ENCODE measurements at regions of chr17 and their contacts with region 1.

Region 1: DNA sequence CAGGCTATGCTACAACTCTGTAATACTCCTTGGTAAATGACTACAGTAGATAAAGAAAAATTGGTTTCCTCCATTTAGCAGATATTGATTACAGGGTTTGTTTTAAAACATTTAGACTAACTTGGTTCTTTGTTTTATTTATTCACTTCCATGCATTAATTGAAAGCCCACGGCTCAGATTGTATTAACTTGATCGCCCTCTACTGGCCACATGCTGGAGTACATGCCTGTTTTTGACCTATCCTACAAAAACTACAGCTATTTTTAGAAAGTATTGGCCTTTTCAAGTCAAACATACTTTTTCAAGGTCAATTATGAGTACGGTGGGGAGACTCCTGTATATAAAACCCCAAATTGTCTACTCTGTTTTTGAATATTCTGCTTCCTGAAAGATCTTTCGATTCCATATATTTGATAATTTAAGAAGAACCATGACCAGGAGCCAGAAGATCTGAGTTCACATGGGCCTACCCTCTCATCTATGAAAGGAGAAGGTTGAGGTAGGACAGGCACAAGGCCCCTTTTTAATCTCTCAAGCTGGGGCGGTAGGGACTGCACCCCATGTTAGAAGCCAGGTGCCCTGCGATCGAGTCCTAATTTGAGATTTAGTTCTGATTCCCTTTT is 51.8 kb downstream of the CA10 start:
- DNase-seq: peak; percentile 25
- H3K4me3 ChIP-seq: no peak overlapping the region
- H3K27ac ChIP-seq: no peak overlapping the region
- H3K4me1 ChIP-seq: peaks cover 9% of the 10 kb centered on the region
- H3K27me3 ChIP-seq: no peaks in the 10 kb centered on the region
- CTCF ChIP-seq: peak; percentile 78

Region 2: GRCh38 chr17:51371732-51372151 is 735.0 kb before region 1 on chr17:
- CTCF ChIA-PET with region 1: no interaction called
- dilution Hi-C with region 1: no loop called
- in situ Hi-C with region 1: no loop called
- intact Hi-C with region 1: loop called (anchors 1 kb)
- DNase-seq: peak; percentile 47
- H3K4me3 ChIP-seq: no peak overlapping the region
- H3K27ac ChIP-seq: no peak overlapping the region
- H3K4me1 ChIP-seq: no peaks in the 10 kb centered on the region
- H3K27me3 ChIP-seq: no peaks in the 10 kb centered on the region
- CTCF ChIP-seq: peak; percentile 77 to 87

Region 3: GRCh38 chr17:51439395-51440229 is 667.1 kb before region 1 on chr17:
- CTCF ChIA-PET with region 1: no interaction called
- dilution Hi-C with region 1: no loop called
- in situ Hi-C with region 1: no loop called
- intact Hi-C with region 1: no loop called
- DNase-seq: peak; percentile 24
- H3K4me3 ChIP-seq: no peak overlapping the region
- H3K27ac ChIP-seq: no peak overlapping the region
- H3K4me1 ChIP-seq: no peaks in the 10 kb centered on the region
- H3K27me3 ChIP-seq: no peaks in the 10 kb centered on the region
- CTCF ChIP-seq: no peak

Region 4: GRCh38 chr17:51585514-51586104 is 521.1 kb before region 1 on chr17:
- CTCF ChIA-PET with region 1: no interaction called
- dilution Hi-C with region 1: no loop called
- in situ Hi-C with region 1: no loop called
- intact Hi-C with region 1: loop called (anchors 1 kb)
- DNase-seq: peak; percentile 21
- H3K4me3 ChIP-seq: no peak overlapping the region
- H3K27ac ChIP-seq: no peak overlapping the region
- H3K4me1 ChIP-seq: no peaks in the 10 kb centered on the region
- H3K27me3 ChIP-seq: no peaks in the 10 kb centered on the region
- CTCF ChIP-seq: peak; percentile 86 to 96

Region 5: GRCh38 chr17:51850201-51850600 is 256.5 kb before region 1 on chr17:
- CTCF ChIA-PET with region 1: no interaction called
- dilution Hi-C with region 1: no loop called
- in situ Hi-C with region 1: loop called in 1 of 2 experiments (anchors 10 kb)
- intact Hi-C with region 1: no loop called
- DNase-seq: no peak
- H3K4me3 ChIP-seq: no peak overlapping the region
- H3K27ac ChIP-seq: no peak overlapping the region
- H3K4me1 ChIP-seq: peaks cover 16% of the 10 kb centered on the region
- H3K27me3 ChIP-seq: no peaks in the 10 kb centered on the region
- CTCF ChIP-seq: peak in 1 of 2 donors; percentile 16

Region 6: DNA sequence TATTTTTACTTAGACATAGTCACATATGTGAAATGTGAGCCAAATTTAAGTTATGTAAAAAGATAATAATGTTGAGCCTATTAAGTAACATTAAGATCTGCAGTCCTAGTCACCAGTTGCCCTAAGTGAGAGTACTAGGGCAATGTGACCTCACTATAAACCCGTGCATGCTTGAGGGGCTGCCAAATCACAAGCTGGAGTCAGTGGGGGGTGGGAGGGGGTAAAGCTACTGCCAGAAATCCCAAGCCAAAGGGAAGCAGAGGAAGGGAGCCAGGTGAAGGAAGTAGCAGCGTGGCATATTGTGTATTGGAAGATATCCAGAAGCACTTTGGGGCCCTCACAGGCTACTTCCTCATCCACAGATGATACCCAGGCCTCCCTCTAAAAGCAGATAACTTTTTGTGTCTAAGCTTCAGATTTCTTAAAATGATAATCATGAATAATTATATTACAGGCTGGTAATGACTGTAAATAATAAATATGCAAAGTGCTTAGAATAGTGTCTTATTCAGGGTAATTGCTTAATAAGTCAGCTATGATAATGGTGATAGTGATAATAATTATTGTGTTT is 82.4 kb before region 1 on chr17:
- CTCF ChIA-PET with region 1: no interaction called
- dilution Hi-C with region 1: loop called (anchors 5 kb)
- in situ Hi-C with region 1: no loop called
- intact Hi-C with region 1: no loop called
- DNase-seq: no peak
- H3K4me3 ChIP-seq: no peak overlapping the region
- H3K27ac ChIP-seq: no peak overlapping the region
- H3K4me1 ChIP-seq: peaks cover 24% of the 10 kb centered on the region
- H3K27me3 ChIP-seq: no peaks in the 10 kb centered on the region
- CTCF ChIP-seq: no peak

Region 7: GRCh38 chr17:52079496-52079895 is 27.3 kb before region 1 on chr17:
- CTCF ChIA-PET with region 1: no interaction called
- dilution Hi-C with region 1: no loop called
- in situ Hi-C with region 1: no loop called
- intact Hi-C with region 1: no loop called
- DNase-seq: peak; percentile 12
- H3K4me3 ChIP-seq: no peak overlapping the region
- H3K27ac ChIP-seq: no peak overlapping the region
- H3K4me1 ChIP-seq: peaks cover 3% of the 10 kb centered on the region
- H3K27me3 ChIP-seq: no peaks in the 10 kb centered on the region
- CTCF ChIP-seq: no peak

Region 8: GRCh38 chr17:52235516-52235915 is 128.8 kb after region 1 on chr17:
- CTCF ChIA-PET with region 1: no interaction called
- dilution Hi-C with region 1: no loop called
- in situ Hi-C with region 1: no loop called
- intact Hi-C with region 1: no loop called
- DNase-seq: peak; percentile 86
- H3K4me3 ChIP-seq: no peak overlapping the region
- H3K27ac ChIP-seq: peak overlapping the region; percentile 18
- H3K4me1 ChIP-seq: peaks cover 39% of the 10 kb centered on the region
- H3K27me3 ChIP-seq: no peaks in the 10 kb centered on the region
- CTCF ChIP-seq: no peak